H1 (cell line): ENCODE measurements at regions of chr3 and their contacts with region 1.

Region 1: GRCh38 chr3:196518966-196519717 is 4.0 kb upstream of the SMCO1 start:
- DNase-seq: peak; percentile 36 to 85
- H3K4me3 ChIP-seq: peak overlapping the region in 1 of 4 experiments; percentile 7; a peak in 1 of 8 replicates
- H3K27ac ChIP-seq: no peak overlapping the region
- H3K4me1 ChIP-seq: no peaks in the 10 kb centered on the region
- H3K27me3 ChIP-seq: no peaks in the 10 kb centered on the region
- CTCF ChIP-seq: peak; percentile 48 to 71 (median 65)
- EP300 ChIP-seq: no peak
- POLR2A ChIP-seq: no peak
- RAD21 ChIP-seq: peak; percentile 88 to 92

Region 2: DNA sequence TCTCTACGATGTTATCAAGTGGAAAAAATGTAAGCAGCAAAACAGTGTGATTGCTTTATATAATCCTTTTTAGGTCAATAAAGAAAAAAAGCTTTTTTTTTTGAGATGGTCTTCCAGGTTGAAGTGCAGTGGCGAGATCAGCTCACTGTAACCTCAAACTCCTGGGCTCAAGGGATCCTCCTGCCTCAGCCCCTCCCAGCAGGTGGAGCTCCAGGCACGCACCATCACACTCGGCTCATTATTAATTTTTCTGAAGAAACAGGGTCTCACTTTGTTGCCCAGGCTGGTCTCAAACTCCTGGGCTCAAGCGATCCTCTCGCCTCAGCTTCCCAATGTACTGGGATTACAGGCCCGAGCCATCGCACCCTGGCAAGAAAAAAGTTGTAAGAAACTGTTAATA is 32.9 kb before region 1 on chr3:
- CTCF ChIA-PET with region 1: interaction called, 12 read pairs
- POLR2A ChIA-PET with region 1: no interaction called
- DNase-seq: no peak
- H3K4me3 ChIP-seq: no peak overlapping the region
- H3K27ac ChIP-seq: no peak overlapping the region
- H3K4me1 ChIP-seq: no peaks in the 10 kb centered on the region
- H3K27me3 ChIP-seq: no peaks in the 10 kb centered on the region
- CTCF ChIP-seq: peak in 2 of 3 experiments; percentile 33 to 56; a peak in 3 of 4 replicates
- EP300 ChIP-seq: no peak
- POLR2A ChIP-seq: no peak
- RAD21 ChIP-seq: peak; percentile 40 to 42; a peak in 3 of 4 replicates

Region 3: DNA sequence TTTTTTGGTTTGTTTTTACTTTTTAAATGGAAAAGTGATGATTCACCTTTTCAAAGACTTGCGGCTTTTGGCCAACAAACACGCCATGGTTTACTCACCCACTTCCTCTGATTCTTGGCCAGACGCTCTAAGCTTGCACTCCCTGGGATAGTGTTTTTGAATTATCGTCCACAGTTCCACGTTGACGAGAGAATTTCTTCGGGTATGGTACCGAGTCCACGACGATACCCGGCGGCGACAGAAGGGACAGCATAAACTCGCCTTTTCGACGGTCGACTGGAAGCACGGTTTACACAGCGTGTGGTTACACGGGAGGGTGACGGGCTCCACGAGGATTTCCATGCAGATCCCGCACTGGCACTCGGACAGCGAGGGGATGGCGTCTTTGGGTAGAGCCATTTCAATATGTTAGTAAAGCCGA is 16.4 kb before region 1 on chr3:
- CTCF ChIA-PET with region 1: interaction called, 40 read pairs
- POLR2A ChIA-PET with region 1: interaction called, 7 read pairs
- DNase-seq: no peak
- H3K4me3 ChIP-seq: peak overlapping the region; percentile 92 to 99 (median 98)
- H3K27ac ChIP-seq: peak overlapping the region; percentile 61; the same call in 1 of the 2 replicates
- H3K4me1 ChIP-seq: peaks cover 0 to 7% (median 3%) of the 10 kb centered on the region in 4 experiments; a peak in 5 of 7 replicates
- H3K27me3 ChIP-seq: no peaks in the 10 kb centered on the region
- CTCF ChIP-seq: no peak
- EP300 ChIP-seq: no peak
- POLR2A ChIP-seq: no peak
- RAD21 ChIP-seq: no peak